Activated naive CD4-positive, alpha-beta T cell treated with anti-CD3 and anti-CD28 coated beads for 36 hours (primary cell): ENCODE measurements at regions of chr17 and their contacts with region 1.

Region 1: DNA sequence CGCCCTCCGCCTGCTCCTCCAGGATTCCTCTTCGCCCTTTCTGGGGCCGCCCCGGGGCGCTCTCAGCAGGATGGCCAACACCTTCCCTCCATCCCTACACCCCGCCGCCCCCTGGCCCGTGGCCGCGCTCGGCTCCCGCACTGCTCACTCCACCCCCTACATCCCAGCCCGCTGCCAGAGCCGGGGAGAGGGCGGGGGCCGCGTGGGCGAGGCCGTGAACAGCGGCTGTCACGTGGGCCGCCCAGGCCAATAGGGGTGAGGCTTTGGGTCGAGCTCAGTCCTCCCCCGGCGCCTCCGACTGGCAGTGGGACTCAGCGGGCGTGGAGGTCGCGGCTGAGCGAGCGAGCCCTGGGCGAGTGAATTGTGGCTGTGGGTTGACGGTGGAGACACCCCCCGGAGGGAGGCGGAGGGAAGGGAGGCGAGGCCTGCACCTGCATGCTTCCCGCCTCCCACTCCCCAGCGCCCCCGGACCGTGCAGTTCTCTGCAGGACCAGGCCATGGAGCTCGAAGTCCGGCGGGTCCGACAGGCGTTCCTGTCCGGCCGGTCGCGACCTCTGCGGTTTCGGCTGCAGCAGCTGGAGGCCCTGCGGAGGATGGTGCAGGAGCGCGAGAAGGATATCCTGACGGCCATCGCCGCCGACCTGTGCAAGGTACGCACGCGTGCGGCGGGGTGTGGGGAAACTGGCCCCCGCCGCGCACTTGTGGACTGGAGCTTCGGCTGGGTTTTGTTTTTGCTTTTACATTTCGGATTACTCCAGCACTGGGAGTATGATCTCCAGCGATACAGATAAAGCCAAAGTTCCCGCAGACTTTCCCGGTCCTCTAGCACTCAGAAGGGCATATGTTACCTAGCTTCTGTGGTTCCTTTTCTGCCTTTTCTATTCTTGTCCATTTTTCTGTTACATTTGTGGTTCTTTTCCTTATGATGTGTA is at the start of gene ALDH3A2:
- DNase-seq: peak; percentile 94
- H3K4me3 Mint-ChIP-seq: peak within 1 kb of the TSS; percentile 90
- H3K27ac Mint-ChIP-seq: peak within 1 kb of the TSS; percentile 73
- H3K4me1 Mint-ChIP-seq: peaks cover 32% of the 10 kb centered on the region
- H3K27me3 Mint-ChIP-seq: no peaks in the 10 kb centered on the region
- total RNA-seq, gene ALDH3A2: 21.0 to 22.3 TPM

Region 2: GRCh38 chr17:19377602-19378392 is 270.9 kb before region 1 on chr17:
- CTCF ChIA-PET with region 1: no interaction called
- intact Hi-C with region 1: loop called (anchors 1 kb)
- DNase-seq: peak; percentile 95
- H3K4me3 Mint-ChIP-seq: peak overlapping the region; percentile 99
- H3K27ac Mint-ChIP-seq: peak overlapping the region; percentile 97
- H3K4me1 Mint-ChIP-seq: peaks cover 8% of the 10 kb centered on the region
- H3K27me3 Mint-ChIP-seq: no peaks in the 10 kb centered on the region

Region 3: GRCh38 chr17:19513897-19514488 is 134.7 kb before region 1 on chr17:
- CTCF ChIA-PET with region 1: interaction called, 24 read pairs
- intact Hi-C with region 1: loop called (anchors 1 kb)
- DNase-seq: peak; percentile 80
- H3K4me3 Mint-ChIP-seq: no peak overlapping the region
- H3K27ac Mint-ChIP-seq: no peak overlapping the region
- H3K4me1 Mint-ChIP-seq: no peaks in the 10 kb centered on the region
- H3K27me3 Mint-ChIP-seq: no peaks in the 10 kb centered on the region

Region 4: DNA sequence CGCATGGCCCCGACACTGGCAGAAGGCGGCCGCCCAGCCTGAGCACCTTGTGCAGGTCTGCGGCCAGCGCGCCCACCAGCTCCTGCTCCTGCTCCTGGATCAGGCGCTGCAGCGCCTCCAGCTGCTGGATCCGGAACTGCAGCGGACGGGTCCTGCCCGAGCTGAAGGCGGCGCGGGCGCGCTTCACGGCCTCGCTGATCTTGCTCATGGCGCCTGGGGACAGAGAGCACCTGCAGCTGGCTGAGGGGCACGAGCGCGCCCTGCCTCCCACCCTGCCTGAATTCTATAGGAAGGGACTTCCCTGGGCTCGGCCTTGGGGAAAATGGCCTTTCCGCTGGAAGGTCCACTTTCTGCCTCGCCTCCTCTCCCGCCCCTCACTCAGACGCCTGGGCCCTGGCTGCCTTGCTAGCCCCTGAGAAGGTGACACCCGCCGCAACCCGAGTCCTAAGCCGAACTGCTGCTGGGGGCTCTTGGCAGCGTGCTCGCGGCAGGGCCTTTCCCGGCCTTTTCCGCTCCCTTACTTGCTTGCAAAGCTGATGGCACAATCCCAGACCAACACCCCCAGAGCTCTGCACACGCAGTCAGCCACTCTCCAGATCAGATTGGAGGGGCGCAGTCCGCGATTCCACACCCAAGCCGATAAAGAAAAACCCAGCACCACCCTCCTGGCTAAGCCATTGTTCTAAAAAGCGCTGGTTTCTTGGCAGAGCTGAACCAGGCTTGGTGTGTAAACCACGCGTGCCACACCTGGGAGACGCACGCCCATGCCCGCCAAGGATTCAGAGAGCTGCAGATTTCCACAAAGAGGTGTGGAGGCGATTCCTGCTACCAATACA is 96.4 kb after region 1 on chr17:
- CTCF ChIA-PET with region 1: interaction called, 9 read pairs
- intact Hi-C with region 1: loop called (anchors 5 kb)
- DNase-seq: peak; percentile 94
- H3K4me3 Mint-ChIP-seq: peak overlapping the region; percentile 61
- H3K27ac Mint-ChIP-seq: no peak overlapping the region
- H3K4me1 Mint-ChIP-seq: peaks cover 6% of the 10 kb centered on the region
- H3K27me3 Mint-ChIP-seq: peaks cover 4% of the 10 kb centered on the region